Activated naive CD4-positive, alpha-beta T cell treated with anti-CD3 and anti-CD28 coated beads for 36 hours (primary cell): ENCODE measurements at regions of chr17 and their contacts with region 1.

Region 1: GRCh38 chr17:45228763-45229539 is 7.3 kb downstream of the FMNL1 start:
- DNase-seq: peak; percentile 96
- H3K4me3 Mint-ChIP-seq: peak overlapping the region; percentile 100
- H3K27ac Mint-ChIP-seq: peak overlapping the region; percentile 100
- H3K4me1 Mint-ChIP-seq: peaks cover 82% of the 10 kb centered on the region
- H3K27me3 Mint-ChIP-seq: no peaks in the 10 kb centered on the region

Region 2: GRCh38 chr17:45051060-45051719 is 177.8 kb before region 1 on chr17 and contains the start of gene DCAKD:
- CTCF ChIA-PET with region 1: interaction called, 4 read pairs
- intact Hi-C with region 1: loop called (anchors 2 kb)
- DNase-seq: peak; percentile 93
- H3K4me3 Mint-ChIP-seq: peak within 1 kb of the TSS; percentile 82
- H3K27ac Mint-ChIP-seq: peak within 1 kb of the TSS; percentile 93
- H3K4me1 Mint-ChIP-seq: peaks cover 41% of the 10 kb centered on the region
- H3K27me3 Mint-ChIP-seq: no peaks in the 10 kb centered on the region
- total RNA-seq, gene DCAKD: 38.1 to 38.9 TPM

Region 3: GRCh38 chr17:45161019-45161825 is 67.7 kb before region 1 on chr17:
- CTCF ChIA-PET with region 1: interaction called, 3 read pairs
- intact Hi-C with region 1: loop called (anchors 1 kb)
- DNase-seq: peak; percentile 99
- H3K4me3 Mint-ChIP-seq: peak overlapping the region; percentile 96
- H3K27ac Mint-ChIP-seq: peak overlapping the region; percentile 96
- H3K4me1 Mint-ChIP-seq: peaks cover 33% of the 10 kb centered on the region
- H3K27me3 Mint-ChIP-seq: no peaks in the 10 kb centered on the region

Region 4: DNA sequence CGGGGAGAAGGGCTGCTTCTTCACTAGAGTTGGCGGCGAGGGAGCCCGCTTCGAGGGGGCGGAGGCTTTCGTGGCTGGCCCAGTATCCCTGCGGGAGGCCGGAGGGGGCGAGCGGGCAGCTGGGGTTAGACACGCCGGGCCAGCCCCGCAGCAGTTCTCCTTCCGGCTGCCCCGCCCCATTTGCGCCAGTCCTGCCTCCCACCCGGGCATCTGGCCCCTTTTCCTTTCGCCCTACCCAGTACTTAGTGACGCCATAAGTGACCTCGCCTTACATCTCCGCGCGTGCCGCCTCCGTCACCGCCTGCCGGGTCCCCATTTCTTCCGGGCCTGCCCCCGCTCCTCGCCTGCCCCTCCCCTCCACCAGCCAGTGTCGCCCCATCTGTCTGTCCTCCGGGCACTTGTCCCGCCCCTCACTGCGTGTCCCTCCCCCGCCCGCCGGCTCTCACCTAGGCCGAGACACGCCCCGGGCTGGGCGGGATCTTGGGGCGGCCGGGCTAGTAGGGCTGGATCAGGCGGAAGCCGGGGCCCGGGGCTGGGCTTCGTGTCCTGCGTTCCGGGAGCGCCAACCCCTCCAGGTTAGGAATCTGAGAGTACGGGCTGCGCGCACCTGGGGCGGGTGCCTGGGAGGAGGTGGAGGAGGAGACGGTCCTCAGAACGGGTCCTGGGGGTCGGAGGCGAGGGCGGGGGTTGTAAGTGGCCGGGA is 18.6 kb after region 1 on chr17:
- CTCF ChIA-PET with region 1: interaction called, 7 read pairs
- intact Hi-C with region 1: loop called (anchors 1 kb)
- DNase-seq: peak; percentile 99
- H3K4me3 Mint-ChIP-seq: peak overlapping the region; percentile 81
- H3K27ac Mint-ChIP-seq: peak overlapping the region; percentile 86
- H3K4me1 Mint-ChIP-seq: peaks cover 54% of the 10 kb centered on the region
- H3K27me3 Mint-ChIP-seq: no peaks in the 10 kb centered on the region

Region 5: DNA sequence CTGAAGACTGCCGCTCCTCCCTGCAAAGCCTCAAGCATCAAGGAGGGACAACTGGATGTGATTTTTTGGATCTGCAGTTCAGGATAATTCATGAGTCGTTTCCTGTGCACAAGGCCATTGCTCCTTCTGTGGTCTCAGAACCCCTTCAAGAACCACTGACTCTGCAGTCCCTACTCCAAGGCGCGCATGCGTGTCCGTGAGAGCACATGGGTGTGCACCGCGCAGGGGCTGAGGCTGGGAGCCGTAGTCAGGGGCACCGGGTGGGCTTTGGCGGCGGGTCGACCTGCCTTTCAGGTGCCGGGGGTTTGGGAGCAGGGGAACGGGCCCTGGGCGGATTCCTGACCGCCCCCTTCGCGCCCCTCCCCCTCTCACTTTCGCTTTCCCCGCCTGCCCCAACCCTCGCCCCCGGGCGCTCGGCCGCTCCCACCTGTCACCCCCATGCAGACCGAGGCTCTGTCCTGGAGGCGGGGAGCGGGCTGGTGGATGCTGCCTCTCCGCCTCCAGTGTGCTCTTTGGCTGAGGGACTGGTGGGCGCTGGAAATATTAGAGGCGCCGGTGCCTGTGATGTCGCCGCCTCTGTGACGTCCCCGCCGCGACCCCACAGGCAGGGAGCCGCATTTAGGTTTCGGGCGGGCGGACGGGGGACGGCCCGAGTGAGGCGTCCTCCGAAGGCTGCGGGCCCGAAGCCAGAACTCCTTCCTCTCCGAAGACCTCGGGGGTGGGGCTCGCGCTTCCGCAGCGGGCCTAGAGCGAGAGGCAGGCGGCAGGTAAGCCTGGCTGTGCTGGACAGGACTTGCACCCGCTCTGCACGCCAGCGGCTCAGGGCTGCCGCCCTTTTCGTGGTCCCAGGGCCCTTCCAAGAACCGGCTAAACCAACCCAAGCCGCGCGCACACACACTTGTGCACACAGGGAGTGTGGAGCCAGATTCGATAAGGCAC is 32.9 kb after region 1 on chr17 and contains the start of gene SPATA32:
- CTCF ChIA-PET with region 1: interaction called, 4 read pairs
- intact Hi-C with region 1: loop called (anchors 2 kb)
- DNase-seq: peak; percentile 79
- H3K4me3 Mint-ChIP-seq: peak within 1 kb of the TSS; percentile 81
- H3K27ac Mint-ChIP-seq: peak within 1 kb of the TSS; percentile 83
- H3K4me1 Mint-ChIP-seq: peaks cover 28% of the 10 kb centered on the region
- H3K27me3 Mint-ChIP-seq: no peaks in the 10 kb centered on the region
- total RNA-seq, gene SPATA32: 0.12 TPM in 1 of 2 experiments, not detected in the other

Region 6: DNA sequence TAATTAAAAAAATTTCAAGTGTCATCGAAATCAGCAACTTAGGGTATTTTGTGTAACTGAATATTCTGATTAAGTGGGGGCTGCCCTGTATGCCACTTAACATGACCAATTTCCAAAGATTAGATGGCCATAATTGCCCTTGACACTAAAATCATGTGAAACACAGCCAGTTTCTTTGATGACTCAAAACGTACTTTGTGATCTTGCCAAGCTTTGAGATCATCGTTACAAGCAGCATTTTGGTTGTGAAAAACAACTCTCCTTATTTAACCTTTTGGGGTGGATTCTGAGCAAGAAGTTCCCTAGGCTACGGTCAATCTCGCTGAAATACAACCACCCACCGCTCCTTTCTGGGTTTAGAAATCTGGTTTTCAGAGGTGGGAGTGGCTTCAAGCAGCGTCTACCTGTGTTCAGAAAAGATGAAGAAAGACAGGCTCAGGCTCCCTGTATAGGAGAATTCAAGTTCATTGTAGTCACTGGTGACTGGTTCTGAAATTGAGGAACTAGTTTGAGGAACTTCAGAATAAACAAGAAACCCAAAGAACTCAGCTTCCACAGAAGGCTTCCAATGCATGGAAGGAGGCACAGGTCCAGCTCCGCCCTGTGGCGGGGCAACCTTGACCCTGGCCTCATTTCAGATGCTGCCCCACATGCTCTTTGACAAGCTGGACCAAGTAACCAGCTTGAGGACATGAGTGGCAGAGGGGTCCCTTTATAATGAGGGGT is 78.5 kb after region 1 on chr17:
- CTCF ChIA-PET with region 1: interaction called, 7 read pairs
- intact Hi-C with region 1: loop called (anchors 1 kb)
- DNase-seq: peak; percentile 77
- H3K4me3 Mint-ChIP-seq: peak overlapping the region; percentile 48
- H3K27ac Mint-ChIP-seq: peak overlapping the region; percentile 91
- H3K4me1 Mint-ChIP-seq: peaks cover 87% of the 10 kb centered on the region
- H3K27me3 Mint-ChIP-seq: no peaks in the 10 kb centered on the region